Mammary epithelial cell (primary cell): ENCODE measurements at regions of chr12 and their contacts with region 1.

Region 1: DNA sequence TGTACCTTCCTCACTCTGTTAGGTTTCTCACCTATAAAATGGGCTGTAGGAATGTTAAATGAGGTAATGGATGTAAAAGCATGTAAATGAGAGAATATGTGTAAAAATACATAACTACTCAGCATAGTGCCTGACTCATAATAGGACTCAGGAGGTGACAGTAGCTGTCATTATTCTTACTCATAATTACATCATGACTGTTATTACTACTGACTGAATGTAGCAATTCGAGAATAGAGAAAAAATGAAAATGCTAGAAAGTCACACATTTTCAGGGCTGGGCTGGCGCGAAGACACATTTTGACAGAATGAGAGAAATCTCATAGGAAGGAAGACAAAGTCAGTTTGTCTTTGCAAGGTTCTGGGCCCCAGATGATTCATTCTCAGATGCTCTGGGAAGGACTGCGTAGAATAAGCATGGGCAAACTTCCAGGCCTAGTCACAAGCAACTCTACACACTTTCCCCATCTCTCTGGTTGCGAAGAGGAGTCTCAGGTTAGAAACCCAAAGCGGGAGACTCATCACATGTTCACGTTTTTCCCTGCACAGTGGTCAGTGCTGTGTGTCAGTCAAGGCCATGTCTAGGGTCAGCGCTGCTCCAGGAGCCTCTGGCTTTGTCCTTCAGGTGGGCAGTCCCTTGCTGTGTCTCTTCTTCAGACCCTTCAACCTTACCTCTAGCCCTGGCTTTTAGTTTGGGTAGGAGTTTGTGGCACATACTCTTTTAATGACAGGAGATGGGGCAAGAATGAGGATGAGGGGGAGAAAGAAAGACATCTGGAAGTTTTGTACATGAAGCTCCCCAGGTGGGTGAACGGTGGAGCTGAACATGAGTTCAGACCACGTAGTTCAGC is 8.4 kb downstream of the GPRC5A start:
- DNase-seq: peak; percentile 79
- H3K4me3 ChIP-seq: no peak overlapping the region
- H3K27ac ChIP-seq: peak overlapping the region; percentile 53
- H3K4me1 ChIP-seq: peaks cover 66% of the 10 kb centered on the region
- H3K27me3 ChIP-seq: no peaks in the 10 kb centered on the region
- CTCF ChIP-seq: no peak

Region 2: GRCh38 chr12:12803186-12803585 is 96.6 kb before region 1 on chr12:
- CTCF ChIA-PET with region 1: no interaction called
- dilution Hi-C with region 1: no loop called
- in situ Hi-C with region 1: no loop called
- intact Hi-C with region 1: loop called (anchors 1 kb)
- DNase-seq: peak; percentile 100
- H3K4me3 ChIP-seq: no peak overlapping the region
- H3K27ac ChIP-seq: peak overlapping the region; percentile 100
- H3K4me1 ChIP-seq: peaks cover 39% of the 10 kb centered on the region
- H3K27me3 ChIP-seq: no peaks in the 10 kb centered on the region
- CTCF ChIP-seq: no peak

Region 3: GRCh38 chr12:12845025-12845787 is 54.5 kb before region 1 on chr12:
- CTCF ChIA-PET with region 1: no interaction called
- dilution Hi-C with region 1: no loop called
- in situ Hi-C with region 1: no loop called
- intact Hi-C with region 1: no loop called
- DNase-seq: peak; percentile 20
- H3K4me3 ChIP-seq: no peak overlapping the region
- H3K27ac ChIP-seq: no peak overlapping the region
- H3K4me1 ChIP-seq: peaks cover 16% of the 10 kb centered on the region
- H3K27me3 ChIP-seq: no peaks in the 10 kb centered on the region
- CTCF ChIP-seq: no peak

Region 4: GRCh38 chr12:12872139-12872881 is 27.4 kb before region 1 on chr12:
- CTCF ChIA-PET with region 1: no interaction called
- dilution Hi-C with region 1: no loop called
- in situ Hi-C with region 1: no loop called
- intact Hi-C with region 1: loop called (anchors 1 kb)
- DNase-seq: peak; percentile 98
- H3K4me3 ChIP-seq: peak overlapping the region in 1 of 3 experiments; percentile 3
- H3K27ac ChIP-seq: peak overlapping the region; percentile 89
- H3K4me1 ChIP-seq: peaks cover 39% of the 10 kb centered on the region
- H3K27me3 ChIP-seq: no peaks in the 10 kb centered on the region
- CTCF ChIP-seq: no peak

Region 5: DNA sequence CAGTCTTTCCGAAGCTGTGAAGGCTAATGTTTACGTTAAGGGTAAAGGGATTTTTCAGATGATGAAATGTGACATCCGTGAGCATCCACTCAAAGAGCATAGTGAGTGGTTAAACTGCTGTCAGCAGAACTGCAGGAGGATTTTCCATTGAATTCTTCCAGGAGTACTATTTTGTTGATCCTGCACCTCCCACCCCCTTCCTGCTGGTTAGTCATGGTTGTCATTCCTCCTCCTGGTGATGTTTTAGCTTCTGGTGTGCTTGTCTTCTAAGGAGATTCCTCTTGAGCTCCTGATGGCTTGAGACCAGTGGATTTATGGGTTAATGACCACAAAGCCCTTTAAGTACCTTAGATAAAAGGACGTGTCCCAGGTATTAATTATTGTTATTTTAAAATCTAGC is 54.6 kb after region 1 on chr12:
- CTCF ChIA-PET with region 1: no interaction called
- dilution Hi-C with region 1: no loop called
- in situ Hi-C with region 1: no loop called
- intact Hi-C with region 1: no loop called
- DNase-seq: no peak
- H3K4me3 ChIP-seq: no peak overlapping the region
- H3K27ac ChIP-seq: no peak overlapping the region
- H3K4me1 ChIP-seq: no peaks in the 10 kb centered on the region
- H3K27me3 ChIP-seq: no peaks in the 10 kb centered on the region
- CTCF ChIP-seq: no peak

Region 6: DNA sequence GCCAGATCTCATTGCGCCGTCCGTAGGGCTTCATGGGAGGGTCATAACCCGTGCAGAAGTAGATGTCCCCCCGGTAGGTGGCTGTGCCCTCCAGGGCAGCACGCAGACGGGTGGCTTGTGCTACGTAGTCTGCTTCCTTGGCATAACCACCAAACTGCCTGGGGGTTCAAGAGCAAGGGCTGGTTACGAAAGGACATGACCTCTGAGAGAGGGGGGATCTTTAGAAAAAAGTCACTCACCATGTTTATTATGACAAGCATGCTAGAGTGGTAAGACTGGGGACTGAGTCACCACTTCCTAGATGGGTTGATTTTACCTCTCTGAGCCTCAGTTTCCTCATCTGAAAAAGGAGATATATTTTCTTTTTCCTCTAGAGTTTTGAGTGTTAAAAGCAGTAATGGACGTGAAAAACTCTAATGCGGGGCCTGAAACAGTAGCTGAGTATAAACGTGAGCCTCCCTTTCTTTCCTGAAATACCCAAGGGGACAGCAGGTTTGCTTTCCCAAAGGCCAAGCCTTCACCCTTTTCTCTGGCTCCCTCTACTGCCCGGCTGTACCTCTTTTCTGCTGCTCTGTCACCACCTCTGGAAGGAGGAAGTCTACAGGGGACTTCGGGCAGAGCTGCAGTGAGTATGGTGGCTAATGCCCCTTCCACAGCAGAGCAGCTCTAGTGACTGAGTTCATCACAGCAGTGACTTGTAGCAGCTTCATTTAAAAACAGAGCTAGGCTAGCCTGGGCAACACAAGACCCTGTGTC is 75.7 kb after region 1 on chr12:
- CTCF ChIA-PET with region 1: no interaction called
- dilution Hi-C with region 1: no loop called
- in situ Hi-C with region 1: loop called in 1 of 2 experiments (anchors 5 kb)
- intact Hi-C with region 1: loop called (anchors 5 kb)
- DNase-seq: peak; percentile 27
- H3K4me3 ChIP-seq: no peak overlapping the region
- H3K27ac ChIP-seq: peak overlapping the region; percentile 41
- H3K4me1 ChIP-seq: peaks cover 24% of the 10 kb centered on the region
- H3K27me3 ChIP-seq: no peaks in the 10 kb centered on the region
- CTCF ChIP-seq: peak; percentile 38 to 61

Region 7: GRCh38 chr12:12983420-12984035 is 83.8 kb after region 1 on chr12:
- CTCF ChIA-PET with region 1: no interaction called
- dilution Hi-C with region 1: no loop called
- in situ Hi-C with region 1: loop called in 1 of 2 experiments (anchors 5 kb)
- intact Hi-C with region 1: loop called (anchors 5 kb)
- DNase-seq: peak; percentile 37
- H3K4me3 ChIP-seq: no peak overlapping the region
- H3K27ac ChIP-seq: no peak overlapping the region
- H3K4me1 ChIP-seq: no peaks in the 10 kb centered on the region
- H3K27me3 ChIP-seq: no peaks in the 10 kb centered on the region
- CTCF ChIP-seq: peak; percentile 55 to 75